Ascending aorta (tissue), 2 donors: ENCODE measurements at regions of chr18 and their contacts with region 1.

Region 1: DNA sequence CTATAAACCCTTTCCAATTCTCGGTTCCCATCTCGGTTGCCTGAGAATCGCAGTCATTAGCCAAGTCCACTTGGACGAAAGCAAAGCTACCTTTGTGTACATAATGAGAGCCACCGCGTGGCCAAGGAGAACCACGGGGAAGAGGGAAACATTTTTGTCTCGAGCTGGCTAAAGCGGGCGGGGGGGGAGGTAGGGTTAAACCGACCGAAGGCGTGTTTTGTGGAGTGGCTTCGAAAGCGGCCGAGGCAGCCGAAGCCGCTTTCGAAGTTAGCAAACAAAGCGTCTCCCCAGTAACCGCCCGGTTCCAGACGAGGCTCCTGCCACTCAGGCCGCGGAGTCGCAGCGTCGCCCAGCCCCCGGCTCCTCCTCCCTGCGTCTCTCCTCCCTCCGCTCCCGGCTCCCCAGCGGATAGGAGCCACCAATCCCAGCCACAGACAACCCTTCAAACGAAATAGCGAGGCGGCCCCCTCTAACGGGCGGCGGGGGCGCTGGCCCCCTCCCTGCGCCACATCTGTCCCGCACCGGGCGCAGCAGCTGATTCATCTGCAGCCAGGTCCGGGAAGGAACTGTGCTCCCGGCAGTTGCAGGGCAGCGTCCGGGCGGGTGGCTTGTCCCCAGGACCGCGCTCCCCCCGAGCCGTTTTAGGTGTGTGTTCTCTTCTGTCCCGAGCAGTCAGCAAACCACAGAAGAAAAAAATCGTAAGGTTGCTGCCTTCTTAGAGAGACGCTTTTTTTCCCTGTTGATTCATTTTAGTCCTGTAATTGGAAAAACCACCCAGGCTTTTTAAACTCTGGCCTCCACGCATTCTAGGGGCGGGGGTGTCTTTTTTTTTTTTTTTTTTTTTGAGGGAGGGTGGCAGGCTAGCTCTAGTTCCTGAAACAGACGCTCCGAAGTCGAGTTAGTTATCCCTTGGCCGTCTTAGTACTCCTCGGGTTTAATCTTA is 1.8 kb upstream of the TGIF1 start:
- DNase-seq: peak; percentile 89 to 97
- H3K4me3 ChIP-seq: peak overlapping the region; percentile 79 to 86
- H3K27ac ChIP-seq: peak overlapping the region; percentile 100
- H3K4me1 ChIP-seq: peaks cover 7 to 14% of the 10 kb centered on the region in 2 donors
- H3K27me3 ChIP-seq: no peaks in the 10 kb centered on the region
- CTCF ChIP-seq: peak in 1 of 3 experiments; percentile 8

Region 2: GRCh38 chr18:2655178-2655953 is 792.8 kb before region 1 on chr18 and contains the start of gene SMCHD1:
- intact Hi-C with region 1: loop called (anchors 5 kb)
- DNase-seq: peak; percentile 66 to 93
- H3K4me3 ChIP-seq: peak within 1 kb of the TSS; percentile 83 to 95
- H3K27ac ChIP-seq: peak within 1 kb of the TSS; percentile 97 to 98
- H3K4me1 ChIP-seq: peaks cover 3 to 27% of the 10 kb centered on the region in 2 donors
- H3K27me3 ChIP-seq: no peaks in the 10 kb centered on the region
- CTCF ChIP-seq: no peak
- total RNA-seq, gene SMCHD1: 29.2 TPM

Region 3: DNA sequence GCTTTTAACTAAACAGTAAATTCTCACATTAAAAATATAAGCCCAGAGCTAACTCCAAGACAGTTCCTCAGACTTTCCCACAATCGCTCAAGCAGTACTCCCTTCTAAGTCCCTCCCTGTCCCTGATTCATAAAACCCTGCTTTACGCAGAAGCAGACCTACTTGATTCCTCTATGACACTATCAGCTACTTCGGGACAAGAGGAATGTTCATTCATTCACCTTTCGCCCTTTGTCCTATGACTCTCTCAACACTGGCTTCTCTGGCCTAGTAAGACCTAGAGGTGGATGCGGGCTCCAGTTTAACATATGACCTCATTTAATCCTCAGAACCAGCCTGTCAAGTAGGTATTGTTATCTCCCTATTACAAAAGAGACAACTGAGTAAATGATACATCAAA is 445.4 kb before region 1 on chr18:
- intact Hi-C with region 1: loop called (anchors 5 kb)
- DNase-seq: no peak
- H3K4me3 ChIP-seq: no peak overlapping the region
- H3K27ac ChIP-seq: peak overlapping the region in 1 of 2 donors; percentile 3
- H3K4me1 ChIP-seq: peaks cover 0 to 13% of the 10 kb centered on the region in 2 donors
- H3K27me3 ChIP-seq: no peaks in the 10 kb centered on the region
- CTCF ChIP-seq: no peak

Region 4: DNA sequence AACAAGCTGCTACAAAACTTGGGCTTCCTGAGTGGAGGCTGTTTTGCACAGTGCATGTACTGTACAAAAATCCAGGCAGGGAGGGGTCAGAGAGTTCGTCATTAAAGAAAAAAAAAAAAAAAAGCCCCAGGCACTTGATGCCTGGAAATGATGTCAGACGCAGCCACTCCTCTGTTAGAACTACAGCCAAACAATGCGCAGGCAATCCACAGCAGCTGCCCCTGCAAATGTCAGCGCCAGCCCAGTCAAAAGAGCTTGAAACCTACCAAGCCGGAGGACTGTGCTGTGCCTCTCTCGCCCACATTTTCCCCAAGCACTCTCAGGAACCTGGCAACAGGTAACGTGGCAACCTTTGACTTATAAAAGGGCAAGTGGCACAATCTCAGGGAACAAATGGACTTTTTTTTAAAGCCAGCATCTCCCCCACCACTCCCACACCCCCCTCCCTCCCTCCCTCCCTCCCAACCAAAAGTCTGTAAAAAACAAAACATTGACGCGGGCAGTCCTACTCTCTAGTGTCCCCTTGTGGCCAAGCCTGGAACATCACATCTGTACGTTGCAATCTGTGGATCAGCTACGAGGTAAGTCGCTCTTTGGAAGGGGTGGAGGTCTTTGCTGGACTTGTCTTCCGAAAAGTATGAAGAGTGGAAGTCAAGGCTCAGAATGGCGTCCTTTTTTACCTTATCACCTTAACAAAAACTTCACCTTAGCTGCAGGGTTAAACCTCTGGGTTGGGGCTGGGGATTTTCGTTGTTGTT is 145.9 kb after region 1 on chr18:
- intact Hi-C with region 1: loop called (anchors 1 kb)
- DNase-seq: peak; percentile 80 to 95
- H3K4me3 ChIP-seq: peak overlapping the region; percentile 61 to 63
- H3K27ac ChIP-seq: peak overlapping the region; percentile 98
- H3K4me1 ChIP-seq: peaks cover 26 to 39% of the 10 kb centered on the region in 2 donors
- H3K27me3 ChIP-seq: no peaks in the 10 kb centered on the region
- CTCF ChIP-seq: peak; percentile 81 to 95 (median 95)

Region 5: GRCh38 chr18:3652380-3653262 is 204.5 kb after region 1 on chr18:
- intact Hi-C with region 1: loop called (anchors 5 kb)
- DNase-seq: peak; percentile 32 to 90
- H3K4me3 ChIP-seq: no peak overlapping the region
- H3K27ac ChIP-seq: peak overlapping the region; percentile 7 to 77
- H3K4me1 ChIP-seq: peaks cover 0 to 5% of the 10 kb centered on the region in 2 donors
- H3K27me3 ChIP-seq: no peaks in the 10 kb centered on the region
- CTCF ChIP-seq: no peak

Region 6: DNA sequence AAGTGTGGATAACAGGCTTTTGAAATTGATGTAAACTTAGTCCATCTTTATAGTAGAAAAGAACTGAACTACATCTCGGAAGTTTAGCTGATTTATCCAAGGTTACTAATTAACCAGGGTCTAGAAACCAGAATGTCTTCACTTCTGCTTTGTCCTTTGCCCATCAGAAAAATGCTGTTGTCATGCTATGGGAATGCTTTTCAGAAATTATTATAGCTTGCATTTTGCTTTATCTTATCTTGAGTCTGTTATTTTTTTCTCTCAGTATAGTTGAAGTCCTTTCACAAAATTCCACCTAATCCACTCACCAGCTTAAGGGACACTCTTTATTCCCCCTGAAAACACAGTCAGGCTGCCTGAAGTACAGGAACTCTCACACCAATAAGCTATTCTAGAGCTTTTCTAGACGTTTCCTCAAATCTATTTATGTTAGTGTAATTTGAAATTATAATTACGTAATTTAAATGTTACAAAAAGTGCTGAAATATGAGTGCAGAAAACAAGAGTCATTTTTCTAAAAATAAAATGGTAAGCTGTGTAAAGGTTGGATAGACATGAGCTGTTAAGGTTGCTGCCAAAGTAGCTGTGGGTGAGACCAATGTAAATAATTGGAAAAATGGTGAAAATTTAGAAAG is 458.1 kb after region 1 on chr18:
- intact Hi-C with region 1: loop called (anchors 5 kb)
- DNase-seq: no peak
- H3K4me3 ChIP-seq: no peak overlapping the region
- H3K27ac ChIP-seq: peak overlapping the region; percentile 21 to 31
- H3K4me1 ChIP-seq: peaks cover 2 to 9% of the 10 kb centered on the region in 2 donors
- H3K27me3 ChIP-seq: no peaks in the 10 kb centered on the region
- CTCF ChIP-seq: no peak

Region 7: GRCh38 chr18:4455113-4455811 is 1007.1 kb after region 1 on chr18 and contains the start of gene DLGAP1:
- intact Hi-C with region 1: loop called (anchors 5 kb)
- DNase-seq: peak in 1 of 2 donors; percentile 79
- H3K4me3 ChIP-seq: peak within 1 kb of the TSS; percentile 62 to 76
- H3K27ac ChIP-seq: peak within 1 kb of the TSS in 1 of 2 donors; percentile 53
- H3K4me1 ChIP-seq: peaks cover 0 to 5% of the 10 kb centered on the region in 2 donors
- H3K27me3 ChIP-seq: no peaks in the 10 kb centered on the region
- CTCF ChIP-seq: no peak
- total RNA-seq, gene DLGAP1: 2.0 TPM